Calu3 (cell line): ENCODE measurements at regions of chr5 and their contacts with region 1.

Region 1: DNA sequence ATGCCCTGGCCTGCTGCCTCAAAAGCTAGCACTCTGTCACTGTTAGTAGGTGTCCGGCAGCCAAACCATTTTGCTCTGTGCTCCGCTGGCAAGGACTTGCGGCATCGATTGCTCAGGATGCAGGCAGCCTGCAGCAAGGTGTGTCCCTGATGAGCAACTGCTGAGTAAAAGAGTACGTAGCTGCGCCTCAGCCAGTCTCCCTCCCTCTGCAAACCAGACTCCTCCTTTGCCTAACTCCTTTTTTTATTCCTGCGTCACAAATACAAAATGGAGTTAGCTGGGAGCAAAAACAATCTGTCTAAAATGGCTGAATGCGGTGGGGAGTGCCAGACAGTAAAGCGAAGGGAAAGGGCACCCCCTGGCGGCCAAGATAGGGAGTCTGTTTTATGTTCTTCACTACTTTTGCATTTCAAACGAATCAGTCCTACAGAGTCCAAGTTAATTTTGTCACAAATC is 61.1 kb downstream of the DIAPH1 start:
- DNase-seq: peak; percentile 91
- H3K4me3 Mint-ChIP-seq: peak overlapping the region; percentile 67
- H3K27ac Mint-ChIP-seq: peak overlapping the region; percentile 98
- H3K4me1 Mint-ChIP-seq: peaks cover 40% of the 10 kb centered on the region
- H3K27me3 Mint-ChIP-seq: no peaks in the 10 kb centered on the region
- CTCF ChIP-seq: peak; percentile 90

Region 2: GRCh38 chr5:141223112-141223783 is 334.5 kb before region 1 on chr5 and contains the start of gene PCDHB14:
- CTCF ChIA-PET with region 1: interaction called, 28 read pairs
- intact Hi-C with region 1: loop called (anchors 1 kb)
- DNase-seq: peak; percentile 66
- H3K4me3 Mint-ChIP-seq: peak within 1 kb of the TSS; percentile 75
- H3K27ac Mint-ChIP-seq: peak within 1 kb of the TSS; percentile 60
- H3K4me1 Mint-ChIP-seq: no peaks in the 10 kb centered on the region
- H3K27me3 Mint-ChIP-seq: no peaks in the 10 kb centered on the region
- CTCF ChIP-seq: peak; percentile 63
- total RNA-seq, gene PCDHB14: 5.7 and 6.3 TPM in 2 replicates

Region 3: GRCh38 chr5:141369994-141370848 is 187.5 kb before region 1 on chr5 and contains the start of gene PCDHGB3:
- CTCF ChIA-PET with region 1: interaction called, 4 read pairs
- intact Hi-C with region 1: loop called (anchors 1 kb)
- DNase-seq: peak; percentile 41
- H3K4me3 Mint-ChIP-seq: peak within 1 kb of the TSS; percentile 62
- H3K27ac Mint-ChIP-seq: peak within 1 kb of the TSS; percentile 75
- H3K4me1 Mint-ChIP-seq: no peaks in the 10 kb centered on the region
- H3K27me3 Mint-ChIP-seq: no peaks in the 10 kb centered on the region
- CTCF ChIP-seq: no peak
- total RNA-seq, gene PCDHGB3: 1.2 and 1.6 TPM in 2 replicates

Region 4: DNA sequence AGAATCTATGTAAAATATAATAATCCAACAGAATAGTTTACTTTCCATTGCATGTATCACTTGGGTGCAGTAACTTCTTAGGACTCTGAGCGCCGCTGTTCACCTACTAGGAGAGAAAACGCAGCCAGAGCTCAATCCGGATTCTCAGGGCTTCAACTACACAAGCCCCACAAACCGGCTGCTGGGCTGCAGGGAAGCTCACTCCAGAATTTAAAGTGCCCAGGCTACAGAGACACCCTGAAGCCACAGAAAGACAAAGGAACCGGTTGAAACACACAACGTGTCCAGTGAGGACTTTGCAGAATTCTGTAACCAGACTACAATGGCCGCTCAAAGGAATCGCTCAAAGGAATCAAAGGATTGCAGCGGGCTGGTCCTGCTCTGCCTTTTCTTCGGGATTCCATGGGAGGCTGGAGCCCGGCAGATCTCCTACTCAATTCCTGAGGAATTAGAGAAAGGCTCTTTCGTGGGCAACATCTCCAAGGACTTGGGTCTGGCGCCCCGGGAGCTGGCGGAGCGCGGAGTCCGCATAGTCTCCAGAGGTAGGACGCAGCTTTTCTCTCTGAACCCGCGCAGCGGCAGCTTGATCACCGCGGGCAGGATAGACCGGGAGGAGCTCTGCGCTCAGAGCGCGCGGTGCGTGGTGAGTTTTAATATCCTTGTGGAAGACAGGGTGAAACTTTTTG is 144.7 kb before region 1 on chr5 and contains the start of gene PCDHGA10:
- CTCF ChIA-PET with region 1: interaction called, 20 read pairs
- intact Hi-C with region 1: loop called (anchors 1 kb)
- DNase-seq: no peak
- H3K4me3 Mint-ChIP-seq: no peak within 1 kb of the TSS
- H3K27ac Mint-ChIP-seq: no peak within 1 kb of the TSS
- H3K4me1 Mint-ChIP-seq: peaks cover 24% of the 10 kb centered on the region
- H3K27me3 Mint-ChIP-seq: no peaks in the 10 kb centered on the region
- CTCF ChIP-seq: no peak
- total RNA-seq, gene PCDHGA10: 2.6 and 3.7 TPM in 2 replicates

Region 5: GRCh38 chr5:141524604-141525597 is 32.8 kb before region 1 on chr5:
- CTCF ChIA-PET with region 1: interaction called, 12 read pairs
- intact Hi-C with region 1: loop called (anchors 1 kb)
- DNase-seq: peak; percentile 90
- H3K4me3 Mint-ChIP-seq: peak overlapping the region; percentile 5
- H3K27ac Mint-ChIP-seq: peak overlapping the region; percentile 7
- H3K4me1 Mint-ChIP-seq: peaks cover 61% of the 10 kb centered on the region
- H3K27me3 Mint-ChIP-seq: no peaks in the 10 kb centered on the region
- CTCF ChIP-seq: peak; percentile 100

Region 6: DNA sequence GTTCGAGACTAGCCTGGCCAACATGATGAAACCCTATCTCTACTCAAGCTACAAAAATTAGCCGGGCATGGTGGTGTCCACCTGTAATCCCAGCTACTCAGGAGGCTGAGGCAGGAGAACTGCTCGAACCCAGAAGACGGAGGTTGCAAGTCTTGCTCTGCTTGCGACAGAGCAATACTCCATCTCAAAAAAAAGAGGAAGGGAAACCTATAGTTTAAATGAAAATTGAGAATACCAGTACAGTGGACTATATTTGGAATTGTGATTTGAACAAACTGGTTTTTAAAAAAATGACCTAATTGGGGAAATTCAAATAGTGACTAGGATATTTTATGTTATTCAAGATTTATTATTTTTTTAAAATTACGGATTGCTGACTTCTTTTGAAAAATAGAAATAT is 27.9 kb after region 1 on chr5:
- CTCF ChIA-PET with region 1: no interaction called
- intact Hi-C with region 1: no loop called
- DNase-seq: no peak
- H3K4me3 Mint-ChIP-seq: no peak overlapping the region
- H3K27ac Mint-ChIP-seq: no peak overlapping the region
- H3K4me1 Mint-ChIP-seq: peaks cover 3% of the 10 kb centered on the region
- H3K27me3 Mint-ChIP-seq: no peaks in the 10 kb centered on the region
- CTCF ChIP-seq: no peak